MCF 10A (cell line): ENCODE measurements at regions of chr9 and their contacts with region 1.

Region 1: GRCh38 chr9:118238139-118238538 is 533.9 kb downstream of the TLR4 start:
- DNase-seq: no peak
- H3K4me3 Mint-ChIP-seq: no peak overlapping the region
- H3K27ac Mint-ChIP-seq: no peak overlapping the region
- H3K4me1 Mint-ChIP-seq: no peaks in the 10 kb centered on the region
- H3K27me3 Mint-ChIP-seq: no peaks in the 10 kb centered on the region
- CTCF ChIP-seq: no peak

Region 2: DNA sequence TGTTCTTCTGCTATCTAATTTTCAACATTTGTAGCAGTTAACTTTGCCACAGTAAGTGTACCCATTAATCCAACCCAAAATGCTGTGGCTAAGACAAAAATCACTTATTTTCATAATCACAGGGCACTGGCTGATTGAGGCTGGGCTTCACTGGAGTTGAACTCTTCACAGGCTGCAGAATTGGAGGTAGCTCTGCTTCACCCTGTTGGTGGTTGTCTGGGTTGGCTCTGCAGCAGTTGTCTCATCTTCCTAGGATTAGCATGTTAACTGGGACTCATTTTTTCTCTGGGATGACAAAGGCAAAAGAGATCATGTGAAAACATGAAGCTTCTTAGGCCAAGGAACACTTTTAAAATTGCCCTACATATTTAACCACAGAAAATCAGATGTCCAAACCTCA is 15.0 kb before region 1 on chr9:
- CTCF ChIA-PET with region 1: interaction called, 3 read pairs
- POLR2A ChIA-PET with region 1: no interaction called
- intact Hi-C with region 1: loop called (anchors 1 kb)
- DNase-seq: no peak
- H3K4me3 Mint-ChIP-seq: no peak overlapping the region
- H3K27ac Mint-ChIP-seq: no peak overlapping the region
- H3K4me1 Mint-ChIP-seq: no peaks in the 10 kb centered on the region
- H3K27me3 Mint-ChIP-seq: no peaks in the 10 kb centered on the region
- CTCF ChIP-seq: no peak